ENCODE measurements at regions of chr20 and their contacts with region 1.

Region 1: DNA sequence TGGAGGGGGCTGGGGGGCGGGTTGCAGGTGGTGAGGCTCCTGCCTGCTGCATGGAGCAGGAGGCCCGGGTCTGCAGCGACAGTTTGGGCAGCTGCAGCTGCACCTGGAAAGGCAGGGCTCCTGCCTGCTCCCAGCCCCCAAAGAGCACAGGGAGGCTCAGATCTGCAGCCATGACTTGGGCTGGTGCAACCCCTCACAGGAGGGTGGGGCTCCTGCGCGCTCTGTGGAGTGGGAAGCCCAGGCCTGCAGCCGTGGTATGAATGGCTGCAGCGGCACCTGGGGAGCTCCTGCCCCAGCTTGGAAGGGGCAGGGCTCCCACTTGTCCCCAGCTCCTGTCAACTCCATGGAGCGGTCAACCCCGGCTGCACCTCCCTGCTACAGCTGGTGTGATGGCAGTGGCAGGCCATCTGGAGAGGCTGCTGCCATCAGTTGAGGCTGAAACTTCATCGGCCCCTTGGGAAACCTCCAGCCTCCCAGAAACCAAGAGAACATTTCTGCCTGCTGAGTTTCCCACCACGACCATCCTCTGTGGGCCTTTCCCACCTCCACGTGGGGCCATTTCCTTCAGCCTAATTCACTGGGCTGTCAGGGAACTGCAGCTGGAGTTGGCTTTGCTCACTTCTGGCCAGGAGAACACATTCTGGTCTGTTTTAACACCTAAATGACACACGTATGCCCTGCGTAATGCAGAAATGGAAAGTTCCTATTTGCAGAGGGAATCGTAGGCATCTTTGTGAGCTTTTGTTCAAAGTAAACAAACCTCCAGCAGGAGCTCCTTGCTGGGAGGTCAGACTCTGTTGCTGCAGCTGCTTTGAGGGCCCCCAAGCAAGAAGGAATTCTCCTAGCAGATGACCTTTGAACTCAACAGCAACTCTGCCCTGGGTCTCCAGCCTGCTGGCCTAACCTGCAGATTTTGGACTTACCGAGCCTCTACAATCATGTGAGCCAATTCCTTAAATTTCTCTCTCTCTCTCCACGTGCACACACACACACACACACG is 429.0 kb downstream of the PREX1 start:
- DNase-seq: peak; percentile 80
- ATAC-seq: peak; percentile 58
- H3K4me3 ChIP-seq: peak overlapping the region in 1 of 3 experiments; percentile 31; a peak in 1 of 6 replicates
- H3K27ac ChIP-seq: peak overlapping the region; percentile 25
- H3K4me1 ChIP-seq: peaks cover 59% of the 10 kb centered on the region
- H3K27me3 ChIP-seq: no peaks in the 10 kb centered on the region
- CTCF ChIP-seq: no peak
- EP300 ChIP-seq: peak in 1 of 2 experiments; percentile 59; a peak in 2 of 4 replicates
- POLR2A ChIP-seq: no peak
- RAD21 ChIP-seq: no peak

Region 2: DNA sequence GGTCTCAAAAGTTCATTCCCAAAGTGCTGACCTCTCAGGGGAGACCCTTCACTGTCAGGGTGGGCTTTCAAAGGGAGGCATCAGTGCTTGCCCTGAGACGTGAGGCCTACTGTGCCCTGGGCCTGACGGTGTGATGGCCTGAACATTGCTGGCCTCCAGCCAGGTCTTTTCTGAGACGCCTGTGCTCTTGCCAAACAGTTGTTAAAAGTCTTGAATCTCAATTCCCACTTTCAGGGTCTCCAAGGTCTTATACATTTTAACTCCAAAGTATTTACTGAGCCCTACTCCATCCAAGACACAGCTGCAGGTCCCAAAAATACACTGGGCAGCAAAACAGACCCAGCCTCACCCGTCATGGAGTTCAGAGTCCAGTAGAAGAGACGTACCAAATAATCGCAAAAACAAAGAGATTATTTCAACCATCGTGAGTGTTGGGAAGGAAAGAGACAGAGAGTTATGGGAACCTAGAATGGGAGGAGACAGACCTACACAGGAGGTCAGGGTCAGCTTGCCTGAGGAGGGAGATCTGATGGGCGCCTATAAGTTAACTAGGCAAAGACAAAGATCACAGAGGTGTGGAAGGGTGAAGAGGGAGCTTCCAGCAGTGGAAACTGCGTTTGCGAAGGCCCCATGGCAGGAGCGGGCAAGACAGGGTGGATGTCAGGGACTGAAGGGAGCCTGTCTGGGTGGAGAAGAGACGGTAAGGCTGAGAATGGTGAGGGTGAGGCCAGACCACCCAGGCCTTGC is 17.3 kb before region 1 on chr20:
- CTCF ChIA-PET with region 1: no interaction called
- POLR2A ChIA-PET with region 1: interaction called, 35 read pairs
- in situ Hi-C with region 1: no loop called
- intact Hi-C with region 1: no loop called
- DNase-seq: peak; percentile 88
- ATAC-seq: peak; percentile 71
- H3K4me3 ChIP-seq: peak overlapping the region; percentile 9 to 53 (median 25); a peak in 5 of 6 replicates
- H3K27ac ChIP-seq: peak overlapping the region; percentile 44
- H3K4me1 ChIP-seq: peaks cover 62% of the 10 kb centered on the region
- H3K27me3 ChIP-seq: no peaks in the 10 kb centered on the region
- CTCF ChIP-seq: no peak
- EP300 ChIP-seq: peak; percentile 15 to 72; a peak in 2 of 4 replicates
- POLR2A ChIP-seq: 0 out of 4 replicates have a peak, but pooled peaks of 1 of the 2 experiments have one; percentile 30
- RAD21 ChIP-seq: no peak